ENCODE measurements at regions of chr11 and their contacts with region 1.

Region 1: DNA sequence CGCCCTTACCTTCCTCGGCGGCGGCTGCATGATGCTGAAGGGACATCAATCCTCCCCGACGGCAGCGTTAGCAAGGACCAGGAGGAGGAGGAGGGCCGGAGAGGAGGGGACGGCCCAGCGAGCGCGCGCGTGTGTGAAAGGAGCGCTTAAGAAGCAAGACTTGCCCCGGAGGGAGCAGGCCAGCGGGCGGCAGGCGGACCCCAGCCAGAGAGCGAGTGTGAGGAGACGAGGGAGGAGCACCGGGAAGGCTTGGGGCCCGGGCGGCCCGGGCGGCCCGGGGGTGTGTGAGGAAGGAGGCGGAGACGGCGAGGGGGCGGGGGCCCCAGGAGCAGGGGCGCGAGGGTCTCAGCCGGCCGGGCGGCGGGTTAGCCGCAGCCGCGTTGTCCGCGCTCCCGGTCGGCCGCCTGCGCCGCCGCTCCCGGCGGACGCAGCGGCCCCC is 251 bp downstream of the FCHSD2 start:
- DNase-seq: peak; percentile 64
- H3K4me3 Mint-ChIP-seq: peak overlapping the region; percentile 96
- H3K27ac Mint-ChIP-seq: peak overlapping the region; percentile 92
- H3K4me1 Mint-ChIP-seq: peaks cover 42% of the 10 kb centered on the region
- H3K27me3 Mint-ChIP-seq: no peaks in the 10 kb centered on the region

Region 2: GRCh38 chr11:72814286-72815109 is 327.4 kb before region 1 on chr11 and contains the start of gene ATG16L2:
- CTCF ChIA-PET with region 1: interaction called, 3 read pairs
- intact Hi-C with region 1: loop called (anchors 2 kb)
- DNase-seq: peak; percentile 89
- H3K4me3 Mint-ChIP-seq: peak within 1 kb of the TSS; percentile 100
- H3K27ac Mint-ChIP-seq: peak within 1 kb of the TSS; percentile 97
- H3K4me1 Mint-ChIP-seq: peaks cover 34% of the 10 kb centered on the region
- H3K27me3 Mint-ChIP-seq: no peaks in the 10 kb centered on the region
- total RNA-seq, gene ATG16L2: 105 to 114 TPM

Region 3: DNA sequence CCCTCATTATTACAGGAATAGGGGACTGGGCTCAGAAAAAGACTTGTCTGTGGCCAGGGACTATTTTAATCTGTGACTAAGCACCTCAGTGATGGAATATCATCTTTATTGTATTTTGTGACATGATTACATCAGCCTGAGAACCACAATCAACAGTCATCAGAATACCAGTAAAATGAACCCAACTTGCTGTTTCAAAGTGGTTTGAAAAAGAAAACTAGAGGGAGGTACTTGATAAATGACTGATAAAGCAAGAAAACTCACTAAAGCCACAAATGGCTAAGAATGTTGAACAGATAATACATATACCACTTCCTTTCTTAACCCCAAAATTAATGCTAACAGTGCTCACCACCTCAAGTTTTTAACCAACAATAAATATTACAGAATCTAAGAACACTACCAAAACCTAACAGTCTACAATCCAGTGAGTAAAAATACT is 172.0 kb before region 1 on chr11:
- CTCF ChIA-PET with region 1: no interaction called
- intact Hi-C with region 1: loop called (anchors 1 kb)
- DNase-seq: peak; percentile 30
- H3K4me3 Mint-ChIP-seq: no peak overlapping the region
- H3K27ac Mint-ChIP-seq: peak overlapping the region; percentile 52
- H3K4me1 Mint-ChIP-seq: peaks cover 27% of the 10 kb centered on the region
- H3K27me3 Mint-ChIP-seq: no peaks in the 10 kb centered on the region

Region 4: GRCh38 chr11:73157053-73158010 is 15.5 kb after region 1 on chr11:
- CTCF ChIA-PET with region 1: interaction called, 10 read pairs
- intact Hi-C with region 1: loop called (anchors 1 kb)
- DNase-seq: no peak
- H3K4me3 Mint-ChIP-seq: no peak overlapping the region
- H3K27ac Mint-ChIP-seq: no peak overlapping the region
- H3K4me1 Mint-ChIP-seq: peaks cover 52% of the 10 kb centered on the region
- H3K27me3 Mint-ChIP-seq: no peaks in the 10 kb centered on the region

Region 5: DNA sequence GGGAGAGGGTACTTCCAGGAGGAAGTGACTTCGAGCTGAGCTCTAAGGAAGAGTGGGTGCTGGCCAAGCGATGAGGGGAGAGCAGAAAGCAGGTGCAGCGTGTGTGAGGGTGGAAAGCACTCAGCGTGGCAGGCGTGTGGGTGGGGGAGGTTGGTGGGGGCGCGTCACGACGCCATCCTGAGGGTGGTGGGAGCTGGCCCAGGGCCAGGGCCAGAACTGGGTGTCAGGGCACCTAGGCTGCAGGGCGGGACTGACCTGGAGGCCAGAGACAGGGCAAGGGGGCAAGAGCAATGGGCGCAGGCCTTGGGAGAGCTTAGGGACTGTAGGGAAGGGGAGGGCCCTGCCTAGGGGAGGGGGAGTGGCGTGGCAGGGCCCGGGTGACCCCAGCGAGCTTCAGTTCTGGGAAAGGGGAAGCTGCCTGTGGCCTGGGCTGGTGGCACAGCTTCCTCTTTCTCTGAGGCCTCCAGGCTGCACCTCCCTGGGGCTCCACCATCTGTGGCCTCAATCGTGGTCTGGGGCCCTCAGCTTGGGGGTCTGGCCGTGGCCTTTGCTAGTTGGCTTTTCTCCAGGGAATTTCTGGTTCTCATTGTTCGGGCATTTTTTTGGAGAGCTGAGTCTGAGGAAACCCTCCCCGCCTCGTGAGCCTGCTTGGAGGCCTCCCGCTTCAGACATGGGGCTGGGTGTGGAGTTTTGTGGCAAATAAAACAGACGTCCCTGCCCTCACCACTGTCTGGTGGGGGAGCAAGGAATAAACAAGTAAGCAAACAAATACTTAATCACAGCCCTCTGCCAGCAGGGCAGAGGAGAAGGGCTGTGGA is 243.2 kb after region 1 on chr11:
- CTCF ChIA-PET with region 1: no interaction called
- intact Hi-C with region 1: no loop called
- DNase-seq: peak; percentile 20
- H3K4me3 Mint-ChIP-seq: no peak overlapping the region
- H3K27ac Mint-ChIP-seq: peak overlapping the region; percentile 16
- H3K4me1 Mint-ChIP-seq: peaks cover 65% of the 10 kb centered on the region
- H3K27me3 Mint-ChIP-seq: no peaks in the 10 kb centered on the region

Region 6: GRCh38 chr11:73647459-73648100 is 505.7 kb after region 1 on chr11:
- CTCF ChIA-PET with region 1: no interaction called
- intact Hi-C with region 1: loop called (anchors 5 kb)
- DNase-seq: peak; percentile 96
- H3K4me3 Mint-ChIP-seq: peak overlapping the region; percentile 80
- H3K27ac Mint-ChIP-seq: peak overlapping the region; percentile 63
- H3K4me1 Mint-ChIP-seq: peaks cover 18% of the 10 kb centered on the region
- H3K27me3 Mint-ChIP-seq: no peaks in the 10 kb centered on the region